Activated T-helper 2 cell treated with anti-CD3 and anti-CD28 coated beads, Interferon-gamma antibody, Interleukin-2, Interleukin-4, amounts not matched to agents 10 μg/mL and 5 μg/mL and 100 μg/mL, durations not matched to agents 14 hours and 24 hours and 36 hours (primary cell): ENCODE measurements at regions of chr5 and their contacts with region 1.

Region 1: DNA sequence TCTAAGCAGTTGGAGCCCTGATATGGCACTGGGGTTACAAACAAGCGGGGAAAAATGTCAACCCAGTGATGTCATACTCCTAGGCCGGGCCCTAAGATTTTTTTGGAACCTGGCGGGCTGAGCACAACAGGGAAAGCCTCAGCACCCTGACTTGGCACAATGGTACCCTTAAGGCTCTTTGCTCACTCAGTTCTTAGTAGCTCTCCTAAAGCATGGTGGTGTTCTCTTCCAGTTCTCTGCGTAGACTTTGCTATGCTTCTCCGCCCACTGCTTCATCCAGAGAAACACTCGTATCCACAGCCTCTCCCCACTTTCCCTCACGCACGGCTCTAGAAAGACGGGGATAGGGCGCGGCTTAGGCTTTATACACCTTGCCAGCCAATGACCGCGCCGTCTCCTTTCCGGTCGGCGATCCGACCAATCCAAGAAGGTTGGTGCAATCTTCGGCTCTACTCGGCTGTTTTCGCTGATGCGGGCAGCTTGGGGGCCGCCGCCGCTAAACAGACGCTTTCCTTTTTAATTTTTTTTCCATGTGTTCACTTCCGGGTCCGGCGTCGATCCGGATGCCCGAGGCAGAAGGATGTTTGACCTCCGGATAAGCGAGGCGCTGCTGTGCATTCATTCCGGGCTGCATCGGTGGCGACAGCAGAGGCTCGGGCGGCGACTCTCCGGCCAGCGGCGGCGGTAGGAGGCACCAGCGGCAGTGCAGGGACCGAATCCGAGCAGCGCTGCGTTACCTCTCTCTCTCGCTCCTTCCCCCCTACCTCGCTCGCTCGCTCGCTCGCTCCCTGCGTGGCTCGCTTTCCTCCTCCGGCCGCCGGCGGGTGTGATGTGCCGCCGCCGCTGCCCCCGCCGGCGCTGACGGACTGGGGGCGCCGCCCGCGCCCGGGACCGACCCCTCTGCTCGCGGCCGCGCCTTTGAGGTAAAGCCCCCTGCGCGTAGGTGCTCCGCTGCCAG is at the start of gene CSNK1G3:
- DNase-seq: peak; percentile 92
- H3K4me3 Mint-ChIP-seq: peak within 1 kb of the TSS; percentile 95
- H3K27ac Mint-ChIP-seq: peak within 1 kb of the TSS; percentile 96
- H3K4me1 Mint-ChIP-seq: peaks cover 39% of the 10 kb centered on the region
- H3K27me3 Mint-ChIP-seq: peaks cover 5% of the 10 kb centered on the region
- total RNA-seq, gene CSNK1G3: 37.7 and 38.2 TPM in 2 replicates

Region 2: DNA sequence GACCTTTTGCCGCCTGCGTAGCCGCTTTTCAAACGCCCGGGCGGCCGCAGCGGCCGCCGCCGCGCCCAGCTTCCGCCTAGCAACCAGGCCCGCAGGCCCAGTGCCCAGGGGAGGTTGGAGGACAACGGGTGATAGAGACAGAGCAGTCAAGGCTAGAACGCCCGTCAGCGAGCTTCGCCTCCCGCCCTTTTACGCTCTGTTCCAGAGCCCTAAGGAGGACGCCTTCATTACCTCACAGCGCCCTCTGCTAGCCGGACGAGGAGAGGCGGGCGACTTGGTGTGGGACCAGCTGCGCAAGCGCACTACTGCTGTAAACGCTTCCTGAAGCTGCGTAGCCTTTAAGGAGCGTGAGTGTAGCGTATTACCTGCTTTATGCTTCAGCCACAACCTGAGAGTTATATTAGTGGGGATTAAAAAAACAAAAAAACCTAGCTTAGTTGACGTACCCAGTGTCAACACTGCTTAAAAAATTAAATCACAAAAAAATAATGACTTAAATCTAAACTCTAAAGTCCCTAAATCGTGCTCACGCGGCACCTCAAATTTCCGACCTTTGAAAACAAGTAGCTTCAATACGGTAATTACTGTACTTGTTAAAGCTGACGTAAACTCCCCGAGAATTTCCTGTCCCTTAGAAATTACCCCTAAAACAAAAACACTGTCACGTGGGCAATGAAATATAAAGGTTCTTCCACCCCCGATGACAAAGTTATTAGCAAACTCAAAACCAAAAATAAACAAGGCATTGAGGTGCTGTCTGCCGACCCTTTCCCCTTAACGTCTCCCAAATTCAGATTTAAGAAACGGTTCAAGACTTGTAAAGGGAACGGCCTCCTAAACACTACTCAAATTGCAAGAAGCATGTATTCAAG is 88.4 kb before region 1 on chr5 and contains the start of gene CEP120:
- intact Hi-C with region 1: loop called (anchors 1 kb)
- DNase-seq: peak; percentile 96
- H3K4me3 Mint-ChIP-seq: peak within 1 kb of the TSS; percentile 50
- H3K27ac Mint-ChIP-seq: no peak within 1 kb of the TSS
- H3K4me1 Mint-ChIP-seq: peaks cover 26% of the 10 kb centered on the region
- H3K27me3 Mint-ChIP-seq: no peaks in the 10 kb centered on the region
- total RNA-seq, gene CEP120: 25.3 and 26.7 TPM in 2 replicates

Region 3: GRCh38 chr5:123450640-123451039 is 61.3 kb before region 1 on chr5:
- intact Hi-C with region 1: loop called (anchors 1 kb)
- DNase-seq: no peak
- H3K4me3 Mint-ChIP-seq: no peak overlapping the region
- H3K27ac Mint-ChIP-seq: no peak overlapping the region
- H3K4me1 Mint-ChIP-seq: peaks cover 51% of the 10 kb centered on the region
- H3K27me3 Mint-ChIP-seq: peaks cover 5% of the 10 kb centered on the region

Region 4: DNA sequence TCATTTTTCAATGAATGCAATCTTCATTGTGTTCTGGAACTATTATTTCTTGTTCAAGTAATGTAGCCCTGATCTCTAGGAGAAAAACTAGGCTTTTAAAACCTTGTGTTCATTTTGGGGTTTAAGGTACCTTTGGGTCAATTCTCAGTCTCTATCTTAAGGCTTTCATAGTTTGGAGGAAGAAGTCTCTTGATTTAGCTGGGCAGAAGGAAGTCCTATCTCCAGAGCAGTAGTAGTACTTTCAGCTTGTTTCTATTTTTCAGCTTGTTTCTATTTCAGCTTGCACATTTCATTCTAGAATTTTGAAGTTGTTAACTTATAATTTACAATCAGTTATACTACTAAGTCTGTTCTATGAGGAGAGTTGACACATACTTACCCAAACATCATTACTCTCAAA is 15.3 kb after region 1 on chr5:
- intact Hi-C with region 1: loop called (anchors 1 kb)
- DNase-seq: no peak
- H3K4me3 Mint-ChIP-seq: no peak overlapping the region
- H3K27ac Mint-ChIP-seq: no peak overlapping the region
- H3K4me1 Mint-ChIP-seq: peaks cover 20% of the 10 kb centered on the region
- H3K27me3 Mint-ChIP-seq: no peaks in the 10 kb centered on the region

Region 5: DNA sequence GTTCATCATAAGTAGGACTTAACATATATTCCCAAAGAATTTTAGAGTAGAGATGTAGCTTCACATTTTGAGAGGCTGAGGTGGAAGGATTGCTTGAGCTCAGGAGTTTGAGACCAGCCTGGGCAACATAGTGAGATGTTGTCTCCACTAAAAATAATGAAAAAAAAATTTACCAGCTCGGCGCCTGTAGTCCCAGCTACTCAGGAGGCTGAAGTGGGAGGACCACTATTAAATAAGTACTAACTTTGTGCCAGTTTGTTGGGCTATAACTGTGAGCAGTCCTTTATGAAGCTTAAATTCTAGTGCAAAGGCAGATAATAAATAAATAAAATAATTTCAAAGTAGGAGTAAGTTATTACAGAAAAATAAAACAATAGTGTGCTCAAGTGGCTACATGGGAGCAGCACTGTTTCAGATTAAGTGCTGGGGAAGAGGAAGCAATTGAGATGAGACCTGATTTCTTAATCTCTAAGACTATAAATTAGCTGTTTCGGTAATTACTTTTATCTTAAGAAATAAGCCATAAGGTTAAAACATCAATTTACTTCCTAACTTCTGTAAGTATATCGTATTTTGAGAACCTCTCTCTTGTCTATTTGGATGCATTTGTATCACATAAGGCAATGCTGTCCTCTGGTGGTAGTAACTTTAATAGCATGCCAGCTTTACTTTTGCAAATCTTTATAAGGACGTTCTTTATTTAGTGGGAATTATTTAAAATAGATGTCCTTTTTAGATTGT is 98.9 kb after region 1 on chr5:
- intact Hi-C with region 1: loop called (anchors 1 kb)
- DNase-seq: no peak
- H3K4me3 Mint-ChIP-seq: no peak overlapping the region
- H3K27ac Mint-ChIP-seq: peak overlapping the region; percentile 49
- H3K4me1 Mint-ChIP-seq: peaks cover 15% of the 10 kb centered on the region
- H3K27me3 Mint-ChIP-seq: no peaks in the 10 kb centered on the region

Region 6: GRCh38 chr5:124383693-124384092 is 871.8 kb after region 1 on chr5:
- intact Hi-C with region 1: no loop called
- DNase-seq: no peak
- H3K4me3 Mint-ChIP-seq: no peak overlapping the region
- H3K27ac Mint-ChIP-seq: no peak overlapping the region
- H3K4me1 Mint-ChIP-seq: no peaks in the 10 kb centered on the region
- H3K27me3 Mint-ChIP-seq: no peaks in the 10 kb centered on the region